Activated T-helper 1 cell treated with anti-CD3 and anti-CD28 coated beads, Interleukin-12 subunit alpha, Interleukin-12 subunit beta, Interleukin-2, Interleukin-4 antibody, amounts not matched to agents 30 ng/mL and 10 ng/mL and 1 ng/mL, durations not matched to agents 14 hours and 24 hours and 36 hours (primary cell): ENCODE measurements at regions of chr5 and their contacts with region 1.

Region 1: GRCh38 chr5:55062039-55062779 is 38.2 kb downstream of the GZMK start:
- DNase-seq: peak; percentile 79
- H3K4me3 Mint-ChIP-seq: peak overlapping the region; percentile 79
- H3K27ac Mint-ChIP-seq: peak overlapping the region; percentile 98
- H3K4me1 Mint-ChIP-seq: peaks cover 83% of the 10 kb centered on the region
- H3K27me3 Mint-ChIP-seq: peaks cover 1% of the 10 kb centered on the region

Region 2: DNA sequence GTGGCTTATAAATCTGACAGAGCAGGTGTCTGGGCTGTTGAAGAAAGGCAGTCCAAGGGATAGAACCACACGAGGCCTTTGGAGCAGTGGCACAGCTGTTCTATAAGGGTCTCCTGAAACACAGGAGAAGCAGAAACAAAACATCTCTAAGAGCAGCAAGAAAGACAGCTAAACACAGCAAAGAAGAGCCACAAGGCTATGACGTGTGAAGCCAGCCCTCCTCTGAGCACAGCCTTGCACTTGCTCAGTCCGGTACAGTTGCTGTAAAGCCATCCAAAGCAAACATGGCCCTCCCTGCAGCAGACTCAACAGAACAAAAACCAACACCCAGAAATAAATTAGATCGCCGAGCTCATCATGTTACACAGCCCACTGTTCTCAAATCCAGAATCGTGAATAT is 40.8 kb before region 1 on chr5:
- intact Hi-C with region 1: loop called (anchors 1 kb)
- DNase-seq: no peak
- H3K4me3 Mint-ChIP-seq: no peak overlapping the region
- H3K27ac Mint-ChIP-seq: no peak overlapping the region
- H3K4me1 Mint-ChIP-seq: peaks cover 52% of the 10 kb centered on the region
- H3K27me3 Mint-ChIP-seq: no peaks in the 10 kb centered on the region